ENCODE measurements at regions of chr11 and their contacts with region 1.

Region 1: DNA sequence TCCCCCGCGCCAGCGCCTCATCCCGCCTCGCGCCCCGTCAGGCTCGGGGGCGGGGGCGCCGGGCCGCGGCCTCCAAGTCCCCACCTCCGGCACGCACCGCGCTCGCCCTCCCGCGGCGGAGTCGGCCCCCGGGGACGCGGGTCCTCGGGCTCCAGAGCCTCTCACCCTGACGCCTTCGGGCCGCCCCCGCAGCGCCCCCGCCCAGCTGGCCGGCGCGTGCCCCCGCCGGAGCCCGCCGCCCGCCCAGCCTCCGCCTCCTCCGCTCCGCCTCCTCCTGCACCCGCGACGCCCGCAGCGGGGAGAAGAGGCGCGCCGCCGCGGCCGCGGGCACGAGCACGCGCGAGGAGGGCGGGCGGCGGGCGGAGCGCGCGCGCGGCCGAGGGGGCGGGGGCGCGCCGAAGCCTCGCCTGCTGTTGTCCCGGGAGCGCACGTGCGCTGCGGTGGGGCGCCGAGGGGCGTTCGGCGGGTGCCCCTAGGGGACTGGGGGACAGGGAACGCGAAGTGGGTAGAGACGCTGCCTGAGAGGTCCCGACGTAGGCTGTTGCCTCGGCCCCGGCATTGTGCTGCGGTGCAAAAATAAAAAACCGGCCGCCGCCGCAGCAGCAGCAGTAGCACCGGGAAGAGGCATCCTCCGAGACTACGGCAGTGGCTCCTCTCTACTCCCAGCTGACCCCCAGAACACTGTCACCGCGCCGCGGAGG is 87.4 kb upstream of the ARHGAP32 start:
- DNase-seq: peak; percentile 94 to 98
- H3K4me3 ChIP-seq: peak overlapping the region; percentile 84
- H3K4me3 Mint-ChIP-seq: peak overlapping the region; percentile 90
- H3K27ac Mint-ChIP-seq: peak overlapping the region; percentile 84
- H3K4me1 ChIP-seq: peaks cover 79% of the 10 kb centered on the region
- H3K4me1 Mint-ChIP-seq: peaks cover 60% of the 10 kb centered on the region
- H3K27me3 ChIP-seq: no peaks in the 10 kb centered on the region
- H3K27me3 Mint-ChIP-seq: no peaks in the 10 kb centered on the region
- CTCF ChIP-seq: peak in 1 of 2 experiments; percentile 38

Region 2: GRCh38 chr11:129215506-129216245 is 63.8 kb before region 1 on chr11:
- CTCF ChIA-PET with region 1: no interaction called
- POLR2A ChIA-PET with region 1: no interaction called
- intact Hi-C with region 1: no loop called
- DNase-seq: peak in 1 of 2 experiments; percentile 55
- H3K4me3 ChIP-seq: no peak overlapping the region
- H3K4me3 Mint-ChIP-seq: peak overlapping the region; percentile 15
- H3K27ac Mint-ChIP-seq: peak overlapping the region; percentile 43
- H3K4me1 ChIP-seq: peaks cover 13% of the 10 kb centered on the region
- H3K4me1 Mint-ChIP-seq: peaks cover 29% of the 10 kb centered on the region
- H3K27me3 ChIP-seq: no peaks in the 10 kb centered on the region
- H3K27me3 Mint-ChIP-seq: no peaks in the 10 kb centered on the region
- CTCF ChIP-seq: no peak

Region 3: DNA sequence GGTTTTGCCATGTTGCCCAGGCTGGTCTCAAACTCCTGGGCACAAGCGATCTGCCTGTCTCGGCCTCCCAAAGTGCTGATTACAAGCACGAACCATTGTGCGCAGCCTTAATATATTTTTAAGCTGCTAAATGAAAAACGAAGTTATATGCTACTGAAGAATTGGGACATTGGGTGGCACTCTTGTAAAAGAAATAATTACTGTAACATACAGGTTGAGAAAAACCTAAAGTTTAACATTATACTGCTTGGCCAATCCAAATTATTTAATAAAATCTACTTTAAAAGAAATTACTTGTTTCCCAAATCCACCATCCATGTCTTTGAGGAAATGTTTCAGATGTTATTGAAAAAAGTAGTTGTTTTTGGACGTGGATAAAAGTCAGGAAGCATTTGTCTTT is 49.5 kb before region 1 on chr11:
- CTCF ChIA-PET with region 1: no interaction called
- POLR2A ChIA-PET with region 1: no interaction called
- intact Hi-C with region 1: loop called (anchors 5 kb)
- DNase-seq: no peak
- H3K4me3 ChIP-seq: no peak overlapping the region
- H3K4me3 Mint-ChIP-seq: no peak overlapping the region
- H3K27ac Mint-ChIP-seq: no peak overlapping the region
- H3K4me1 ChIP-seq: peaks cover 3% of the 10 kb centered on the region
- H3K4me1 Mint-ChIP-seq: peaks cover 2% of the 10 kb centered on the region
- H3K27me3 ChIP-seq: no peaks in the 10 kb centered on the region
- H3K27me3 Mint-ChIP-seq: no peaks in the 10 kb centered on the region
- CTCF ChIP-seq: no peak

Region 4: GRCh38 chr11:129259931-129260348 is 19.5 kb before region 1 on chr11:
- CTCF ChIA-PET with region 1: no interaction called
- POLR2A ChIA-PET with region 1: no interaction called
- intact Hi-C with region 1: loop called (anchors 1 kb)
- DNase-seq: peak; percentile 53 to 58
- H3K4me3 ChIP-seq: no peak overlapping the region
- H3K4me3 Mint-ChIP-seq: peak overlapping the region; percentile 54
- H3K27ac Mint-ChIP-seq: peak overlapping the region; percentile 61
- H3K4me1 ChIP-seq: peaks cover 36% of the 10 kb centered on the region
- H3K4me1 Mint-ChIP-seq: peaks cover 60% of the 10 kb centered on the region
- H3K27me3 ChIP-seq: no peaks in the 10 kb centered on the region
- H3K27me3 Mint-ChIP-seq: no peaks in the 10 kb centered on the region
- CTCF ChIP-seq: no peak

Region 5: GRCh38 chr11:129440028-129440713 is 160.7 kb after region 1 on chr11:
- CTCF ChIA-PET with region 1: no interaction called
- POLR2A ChIA-PET with region 1: no interaction called
- intact Hi-C with region 1: no loop called
- DNase-seq: peak; percentile 65 to 66
- H3K4me3 ChIP-seq: no peak overlapping the region
- H3K4me3 Mint-ChIP-seq: no peak overlapping the region
- H3K27ac Mint-ChIP-seq: peak overlapping the region; percentile 13
- H3K4me1 ChIP-seq: peaks cover 19% of the 10 kb centered on the region
- H3K4me1 Mint-ChIP-seq: peaks cover 29% of the 10 kb centered on the region
- H3K27me3 ChIP-seq: no peaks in the 10 kb centered on the region
- H3K27me3 Mint-ChIP-seq: no peaks in the 10 kb centered on the region
- CTCF ChIP-seq: no peak

Region 6: GRCh38 chr11:129580278-129580677 is 300.8 kb after region 1 on chr11:
- CTCF ChIA-PET with region 1: no interaction called
- POLR2A ChIA-PET with region 1: no interaction called
- intact Hi-C with region 1: no loop called
- DNase-seq: no peak
- H3K4me3 ChIP-seq: no peak overlapping the region
- H3K4me3 Mint-ChIP-seq: no peak overlapping the region
- H3K27ac Mint-ChIP-seq: no peak overlapping the region
- H3K4me1 ChIP-seq: no peaks in the 10 kb centered on the region
- H3K4me1 Mint-ChIP-seq: no peaks in the 10 kb centered on the region
- H3K27me3 ChIP-seq: no peaks in the 10 kb centered on the region
- H3K27me3 Mint-ChIP-seq: no peaks in the 10 kb centered on the region
- CTCF ChIP-seq: no peak

Measured in Caco-2 (cell line).